AG04449 (cell line): ENCODE measurements at regions of chr1 and their contacts with region 1.

Region 1: DNA sequence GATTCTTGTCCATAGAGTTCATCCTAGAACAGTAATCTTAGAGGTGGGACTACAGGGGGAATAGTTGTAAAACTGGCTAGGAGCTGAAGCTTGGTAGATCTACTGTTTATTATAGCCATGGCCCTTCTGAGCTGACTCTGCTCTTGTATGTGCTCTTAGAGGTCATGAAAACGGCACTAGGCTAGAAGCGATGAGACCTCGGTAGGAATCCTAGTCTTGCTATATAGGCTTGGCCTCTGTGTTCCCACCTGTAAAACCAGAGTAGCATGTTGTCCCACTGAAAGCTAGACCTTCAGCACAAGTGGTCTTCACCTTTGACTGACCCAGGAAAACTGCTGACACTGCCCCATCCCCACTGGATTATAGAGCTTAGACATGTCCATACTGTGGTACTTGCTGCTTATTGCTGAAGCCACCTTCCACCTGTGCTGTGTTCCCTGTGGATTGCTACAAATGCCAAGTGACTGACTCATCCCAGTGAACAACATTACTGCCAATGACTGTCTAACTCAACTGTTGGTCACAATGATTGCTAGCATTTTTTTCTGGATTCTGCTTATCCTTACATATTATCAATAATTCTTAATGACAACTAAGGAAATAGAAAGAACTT is 23.0 kb upstream of the PIGC start:
- DNase-seq: no peak
- H3K4me3 ChIP-seq: no peak overlapping the region
- CTCF ChIP-seq: no peak

Region 2: DNA sequence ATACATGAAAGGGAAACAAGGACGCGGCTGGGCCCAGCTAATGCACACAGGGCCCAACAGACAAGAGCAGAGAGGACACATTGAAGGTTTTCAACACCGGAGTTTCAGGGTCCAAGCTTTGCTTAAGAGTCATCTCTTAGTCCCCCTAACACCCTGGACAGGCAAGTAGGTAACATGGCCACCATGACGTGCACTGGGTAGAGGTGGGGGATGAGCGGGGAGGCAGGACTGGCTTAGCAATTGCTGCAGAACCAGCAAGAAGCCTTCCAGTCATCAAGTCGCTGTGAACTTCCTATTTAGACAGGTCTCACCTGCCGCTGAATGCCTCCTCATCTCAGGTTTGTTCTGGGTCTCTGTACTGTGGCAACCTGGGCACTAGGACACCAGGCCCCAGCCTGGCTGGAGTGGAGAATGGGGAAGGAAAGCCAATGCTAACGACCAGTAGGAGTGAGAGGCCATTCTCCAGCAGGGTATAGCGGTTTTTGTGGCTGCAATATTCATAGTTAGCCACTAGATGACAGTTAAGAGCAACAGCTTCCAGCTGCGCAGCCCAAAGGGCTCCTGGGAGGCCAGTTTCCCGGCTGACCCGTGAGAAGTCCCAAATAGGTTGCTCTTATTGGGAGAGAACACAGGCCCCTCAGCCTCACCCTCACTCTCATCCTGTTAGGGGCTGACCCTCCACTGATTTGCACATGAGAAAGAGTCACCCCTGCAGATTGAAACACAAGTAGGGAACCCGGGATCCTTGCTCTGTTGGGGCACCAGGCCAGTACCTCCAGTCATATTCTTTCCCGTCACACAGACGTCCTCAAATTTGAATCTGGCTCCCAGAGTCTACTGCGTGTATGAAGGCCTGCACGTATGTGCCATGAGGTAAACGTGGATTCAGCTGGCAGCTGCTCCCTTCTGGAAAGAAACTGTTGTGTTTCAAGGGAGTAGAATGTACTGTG is 17.0 kb before region 1 on chr1:
- CTCF ChIA-PET with region 1: interaction called, 22 read pairs
- POLR2A ChIA-PET with region 1: no interaction called
- DNase-seq: no peak
- H3K4me3 ChIP-seq: no peak overlapping the region
- CTCF ChIP-seq: peak; percentile 70

Region 3: DNA sequence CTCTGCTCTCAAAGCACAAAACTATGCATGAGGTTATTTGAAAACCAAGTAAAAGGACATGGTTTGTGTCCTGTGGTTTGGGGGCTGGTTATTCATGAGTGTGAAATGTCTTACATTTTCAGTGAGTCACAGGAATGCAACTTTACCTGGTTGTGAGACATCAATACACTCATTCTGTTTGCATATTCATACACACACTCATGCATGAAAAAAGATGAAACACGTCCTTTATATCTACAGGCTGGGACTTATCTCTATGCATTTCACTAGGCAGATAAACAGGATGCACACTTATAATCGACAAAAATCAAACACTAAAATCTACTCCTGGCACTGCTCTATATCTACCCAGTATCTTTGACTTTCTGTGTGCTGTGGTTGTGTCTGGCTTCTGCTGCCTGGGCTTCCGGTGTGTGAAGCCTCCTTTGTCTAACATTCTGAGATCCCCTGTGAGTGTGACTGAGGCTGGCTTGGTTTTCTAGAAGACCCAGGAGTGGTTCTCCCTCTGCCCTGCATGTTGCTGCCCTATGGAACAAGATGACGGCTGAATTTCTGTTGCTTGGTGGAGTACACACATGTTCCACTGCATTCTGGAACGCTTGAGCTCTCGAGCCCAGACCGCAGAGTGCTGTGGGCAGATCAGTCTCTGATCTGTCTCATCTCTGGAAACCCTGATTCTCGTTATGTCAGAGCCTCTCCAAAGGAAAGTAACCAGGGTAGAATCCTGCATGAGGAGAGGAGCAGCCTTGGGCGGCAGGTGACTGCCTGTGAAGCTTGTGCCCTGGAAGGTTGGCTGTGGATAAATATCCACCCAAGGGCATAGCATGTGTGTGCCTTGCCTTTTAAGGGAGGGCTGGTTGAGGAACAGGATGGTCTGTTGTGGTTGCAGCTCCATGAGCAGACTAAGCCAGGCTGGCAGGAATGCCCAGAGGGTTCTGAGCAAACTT is 172.3 kb after region 1 on chr1:
- CTCF ChIA-PET with region 1: no interaction called
- POLR2A ChIA-PET with region 1: no interaction called
- DNase-seq: peak; percentile 84
- H3K4me3 ChIP-seq: peak overlapping the region; percentile 15
- CTCF ChIP-seq: no peak